ENCODE measurements at regions of chr10 and their contacts with region 1.

Region 1: DNA sequence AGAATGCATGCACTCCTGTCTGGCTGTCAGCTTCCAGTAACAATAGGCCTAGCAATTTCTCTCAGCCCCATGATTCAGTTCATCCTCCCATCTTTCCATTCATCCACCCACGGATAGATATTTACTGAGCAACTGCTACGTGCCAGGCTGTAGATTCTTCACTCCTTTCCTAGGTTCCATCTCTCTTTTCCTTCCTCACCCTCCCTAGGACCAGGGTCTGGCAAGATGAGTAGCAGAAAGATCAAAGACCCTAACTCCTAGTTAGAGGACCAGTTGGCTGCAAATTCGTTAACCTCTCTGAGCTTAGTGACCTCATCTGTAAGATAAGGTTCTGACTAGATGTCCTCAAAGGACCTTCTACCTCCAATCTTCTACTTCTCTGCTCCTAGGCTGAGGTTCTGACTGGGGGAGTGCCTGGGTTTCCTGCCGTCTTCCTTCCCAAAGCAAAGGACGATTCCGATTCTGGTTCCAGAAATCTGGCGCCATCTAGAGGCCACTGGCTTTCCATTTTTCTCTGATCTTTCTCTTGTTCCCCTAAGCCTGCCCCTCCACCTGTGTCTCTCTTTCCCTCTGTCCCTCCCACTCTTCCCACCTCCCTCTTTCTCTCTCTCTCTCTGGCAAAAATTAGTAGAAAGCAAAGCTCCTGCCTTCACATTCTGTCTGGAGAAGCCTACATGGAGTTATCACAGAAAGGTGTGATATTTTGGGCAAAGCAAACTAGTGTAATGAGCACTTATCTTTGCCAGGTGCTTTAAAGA is 26.2 kb downstream of the TBATA start:
- DNase-seq: peak; percentile 16
- H3K4me3 ChIP-seq: no peak overlapping the region
- CTCF ChIP-seq: peak; percentile 74

Region 2: GRCh38 chr10:70558871-70559810 is 199.8 kb before region 1 on chr10:
- CTCF ChIA-PET with region 1: interaction called, 496 read pairs
- POLR2A ChIA-PET with region 1: interaction called, 3 read pairs
- DNase-seq: no peak
- H3K4me3 ChIP-seq: no peak overlapping the region
- CTCF ChIP-seq: peak; percentile 63

Region 3: DNA sequence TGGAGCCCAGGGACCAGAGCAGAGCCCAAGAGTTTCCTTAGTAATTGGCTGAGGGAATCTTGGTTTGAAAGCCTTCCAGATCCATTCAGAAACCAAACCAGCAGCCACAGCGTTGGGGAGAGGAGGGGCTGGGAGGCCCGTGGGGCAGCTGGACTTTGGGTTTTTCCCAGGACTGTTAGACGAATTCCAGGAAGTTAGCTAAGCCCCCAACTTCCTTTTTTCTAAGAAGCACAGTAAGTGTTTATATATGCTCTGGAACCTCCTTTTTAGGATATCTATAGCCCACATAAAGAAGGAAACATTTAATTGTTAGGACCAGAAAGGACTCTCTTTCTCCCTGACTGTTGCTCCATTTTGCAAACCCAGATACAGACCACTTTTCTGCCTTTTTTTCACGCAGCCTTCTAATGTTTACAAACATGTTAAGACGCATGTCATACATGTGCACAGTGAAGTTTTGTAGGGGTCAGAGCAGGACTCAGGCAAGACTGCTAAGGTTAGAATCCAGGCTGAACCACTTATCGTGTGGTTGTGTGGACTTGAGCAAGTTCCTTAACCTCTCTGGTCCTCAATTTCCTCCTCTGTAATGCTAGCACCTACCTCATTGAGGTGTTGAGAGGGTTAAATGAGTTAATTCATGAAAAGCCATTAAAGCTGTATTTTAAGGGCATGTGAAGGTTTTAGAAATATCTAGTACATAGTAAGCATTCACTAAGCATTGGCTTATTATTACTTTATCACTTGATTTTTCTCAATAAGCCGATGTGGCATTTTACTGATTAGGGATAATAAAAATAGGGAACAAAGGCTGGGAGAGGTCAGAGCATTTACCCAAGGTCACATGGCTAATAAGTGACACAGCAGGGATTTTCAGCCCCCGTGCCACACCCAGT is 16.2 kb before region 1 on chr10:
- CTCF ChIA-PET with region 1: interaction called, 155 read pairs
- POLR2A ChIA-PET with region 1: no interaction called
- DNase-seq: peak; percentile 53
- H3K4me3 ChIP-seq: no peak overlapping the region
- CTCF ChIP-seq: no peak

Region 4: GRCh38 chr10:70880077-70880534 is 121.2 kb after region 1 on chr10:
- CTCF ChIA-PET with region 1: interaction called, 128 read pairs
- POLR2A ChIA-PET with region 1: no interaction called
- DNase-seq: no peak
- H3K4me3 ChIP-seq: no peak overlapping the region
- CTCF ChIP-seq: peak; percentile 83

Measured in AG04449 (cell line).